ENCODE measurements at regions of chr1 and their contacts with region 1.

Region 1: DNA sequence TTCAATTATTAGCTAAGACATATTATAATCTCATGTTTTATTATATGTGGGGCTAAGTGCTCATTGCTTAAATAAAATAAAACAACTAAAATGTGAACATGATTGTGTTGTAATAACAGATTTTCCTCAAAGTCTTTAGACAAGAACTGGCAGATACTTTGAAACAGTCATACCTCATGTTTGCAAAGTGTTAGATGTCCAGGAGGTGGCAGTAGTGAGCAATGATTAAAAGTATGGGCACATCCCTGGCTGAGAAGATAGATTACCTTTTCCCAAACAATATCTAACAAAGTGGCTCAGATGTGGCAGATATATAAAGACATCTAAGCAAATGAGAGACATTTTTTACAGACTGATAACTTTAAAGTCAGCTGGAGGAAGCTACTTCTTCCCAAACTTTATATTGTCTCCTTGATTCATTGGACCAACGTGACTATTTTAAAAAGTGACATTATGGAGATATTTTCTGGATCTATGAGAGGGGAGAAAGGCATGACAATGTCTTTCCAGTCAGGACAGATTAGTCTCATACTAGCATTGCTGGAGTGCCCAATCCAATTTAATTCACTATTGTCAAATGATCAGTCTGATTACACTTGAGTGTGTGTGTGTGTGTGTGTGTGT is 269.8 kb downstream of the S1PR1 start:
- DNase-seq: peak; percentile 76
- H3K4me3 Mint-ChIP-seq: no peak overlapping the region
- H3K27ac Mint-ChIP-seq: no peak overlapping the region
- H3K4me1 Mint-ChIP-seq: no peaks in the 10 kb centered on the region
- H3K27me3 Mint-ChIP-seq: peaks cover 11% of the 10 kb centered on the region
- CTCF ChIP-seq: peak; percentile 67

Region 2: DNA sequence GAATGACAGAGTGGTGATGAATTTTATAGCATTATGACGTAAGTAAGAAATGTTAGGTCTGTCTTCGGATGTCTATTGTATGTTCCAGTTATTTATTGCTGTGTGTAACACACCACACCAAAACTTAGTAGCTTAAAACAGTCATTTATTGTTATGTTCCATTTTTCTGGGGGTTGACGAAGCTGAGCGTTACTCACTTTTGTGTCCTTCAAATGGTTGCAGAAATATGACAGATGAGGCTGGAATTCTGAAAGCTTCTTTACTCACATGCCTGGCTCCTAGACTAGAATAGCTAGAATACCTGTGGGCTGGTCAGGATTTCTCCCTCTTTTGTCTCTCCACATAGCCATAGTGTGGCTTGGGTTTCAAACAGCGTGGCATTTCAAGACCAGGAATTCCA is 331.9 kb before region 1 on chr1:
- CTCF ChIA-PET with region 1: no interaction called
- POLR2A ChIA-PET with region 1: no interaction called
- intact Hi-C with region 1: no loop called
- DNase-seq: peak; percentile 36
- H3K4me3 Mint-ChIP-seq: no peak overlapping the region
- H3K27ac Mint-ChIP-seq: peak overlapping the region; percentile 36
- H3K4me1 Mint-ChIP-seq: peaks cover 8% of the 10 kb centered on the region
- H3K27me3 Mint-ChIP-seq: no peaks in the 10 kb centered on the region
- CTCF ChIP-seq: no peak

Region 3: DNA sequence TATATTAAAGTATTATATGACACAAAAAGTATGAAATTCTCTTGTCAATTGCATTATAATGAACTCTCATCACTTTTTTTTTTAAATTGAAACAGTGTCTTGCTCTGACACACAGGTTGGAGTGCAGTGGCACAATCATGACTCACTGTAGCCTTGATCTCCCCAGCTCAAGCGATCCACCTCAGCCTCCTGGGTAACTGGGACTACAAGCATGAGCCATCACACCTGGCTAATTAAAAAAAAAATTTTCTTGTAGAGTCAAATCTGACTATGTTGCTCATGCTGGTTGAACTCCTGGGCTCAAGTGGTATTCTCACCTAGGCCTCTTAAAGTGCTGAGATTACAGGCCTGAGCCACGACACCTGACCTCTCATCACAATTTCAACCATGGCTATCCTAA is 10.5 kb before region 1 on chr1:
- CTCF ChIA-PET with region 1: interaction called, 16 read pairs
- POLR2A ChIA-PET with region 1: no interaction called
- intact Hi-C with region 1: no loop called
- DNase-seq: peak; percentile 23
- H3K4me3 Mint-ChIP-seq: no peak overlapping the region
- H3K27ac Mint-ChIP-seq: no peak overlapping the region
- H3K4me1 Mint-ChIP-seq: peaks cover 5% of the 10 kb centered on the region
- H3K27me3 Mint-ChIP-seq: no peaks in the 10 kb centered on the region
- CTCF ChIP-seq: no peak

Region 4: GRCh38 chr1:101526813-101527212 is 20.2 kb after region 1 on chr1:
- CTCF ChIA-PET with region 1: interaction called, 10 read pairs
- POLR2A ChIA-PET with region 1: no interaction called
- intact Hi-C with region 1: no loop called
- DNase-seq: peak; percentile 22
- H3K4me3 Mint-ChIP-seq: no peak overlapping the region
- H3K27ac Mint-ChIP-seq: no peak overlapping the region
- H3K4me1 Mint-ChIP-seq: peaks cover 7% of the 10 kb centered on the region
- H3K27me3 Mint-ChIP-seq: peaks cover 16% of the 10 kb centered on the region
- CTCF ChIP-seq: no peak